GM13977 (cell line): ENCODE measurements at regions of chr11 and their contacts with region 1.

Region 1: GRCh38 chr11:6443269-6444003 is 2.6 kb upstream of the HPX start:
- DNase-seq: peak; percentile 66
- CTCF ChIP-seq: peak; percentile 88

Region 2: GRCh38 chr11:6196396-6196795 is 247.0 kb before region 1 on chr11:
- in situ Hi-C with region 1: no loop called
- DNase-seq: no peak
- CTCF ChIP-seq: no peak

Region 3: GRCh38 chr11:6389921-6390724 is 53.3 kb before region 1 on chr11 and contains the start of gene SMPD1:
- in situ Hi-C with region 1: loop called (anchors 10 kb)
- DNase-seq: peak; percentile 96
- CTCF ChIP-seq: no peak